ENCODE measurements at regions of chr1 and their contacts with region 1.

Region 1: GRCh38 chr1:19563324-19564097 is 78.2 kb upstream of the CAPZB start:
- DNase-seq: peak in 1 of 2 donors; percentile 88
- H3K4me3 ChIP-seq: peak overlapping the region; percentile 30
- H3K27ac ChIP-seq: peak overlapping the region; percentile 83
- H3K4me1 ChIP-seq: peaks cover 37% of the 10 kb centered on the region
- H3K27me3 ChIP-seq: no peaks in the 10 kb centered on the region
- CTCF ChIP-seq: no peak
- POLR2A ChIP-seq: no peak

Region 2: DNA sequence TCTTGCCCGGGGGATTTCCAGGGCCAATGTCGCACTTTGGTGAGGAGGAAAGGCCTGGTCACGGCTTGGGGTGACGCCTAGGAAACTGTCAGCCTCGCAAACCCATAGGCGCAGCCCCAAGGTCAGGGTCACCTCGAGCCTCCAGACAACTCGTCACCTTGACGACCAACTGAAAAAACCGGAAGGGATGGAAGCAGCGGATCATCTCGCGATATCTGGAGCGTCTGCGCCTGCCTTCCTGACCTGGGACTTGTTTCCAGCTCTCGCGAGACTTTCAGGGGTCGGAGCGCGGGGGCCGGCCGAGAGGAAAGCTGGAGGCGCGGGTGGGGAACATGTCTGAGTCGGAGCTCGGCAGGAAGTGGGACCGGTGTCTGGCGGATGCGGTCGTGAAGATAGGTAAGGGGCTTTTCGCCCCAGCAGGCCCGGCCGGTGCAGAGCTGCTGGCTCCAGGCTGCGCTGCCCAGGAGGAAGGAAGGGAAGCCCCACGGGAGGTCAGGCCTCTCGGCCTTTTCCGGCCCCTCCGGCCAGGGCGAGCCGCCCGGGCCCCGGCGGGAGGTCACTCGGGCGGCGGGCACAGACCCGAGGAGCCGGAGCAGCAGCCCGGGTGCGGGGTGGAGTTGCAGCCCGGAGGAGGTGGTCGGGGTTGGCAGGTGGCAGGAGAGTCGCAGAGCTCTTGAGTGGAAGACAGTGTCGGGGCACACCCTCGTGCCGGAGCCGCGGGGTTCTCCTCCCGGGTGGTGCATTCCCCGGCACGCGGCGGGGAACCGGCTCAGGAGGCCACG is 33.4 kb after region 1 on chr1:
- intact Hi-C with region 1: loop called (anchors 5 kb)
- DNase-seq: peak; percentile 97 to 98
- H3K4me3 ChIP-seq: peak overlapping the region; percentile 95 to 99
- H3K27ac ChIP-seq: peak overlapping the region; percentile 96
- H3K4me1 ChIP-seq: peaks cover 50% of the 10 kb centered on the region
- H3K27me3 ChIP-seq: no peaks in the 10 kb centered on the region
- CTCF ChIP-seq: no peak
- POLR2A ChIP-seq: peak in 1 of 2 donors; percentile 71

Measured in vagina (tissue), 2 donors.